ENCODE measurements at regions of chrX and their contacts with region 1.

Region 1: GRCh38 chrX:129654419-129655165 is at the start of gene APLN:
- DNase-seq: no peak
- H3K4me3 ChIP-seq: peak within 1 kb of the TSS; percentile 26
- H3K27ac ChIP-seq: no peak within 1 kb of the TSS
- H3K4me1 ChIP-seq: peaks cover 7% of the 10 kb centered on the region
- CTCF ChIP-seq: no peak
- total RNA-seq, gene APLN: not detected in 2 replicates

Region 2: GRCh38 chrX:129823115-129823514 is 168.5 kb after region 1 on chrX:
- CTCF ChIA-PET with region 1: no interaction called
- POLR2A ChIA-PET with region 1: interaction called, 3 read pairs
- intact Hi-C with region 1: loop called (anchors 1 kb)
- DNase-seq: peak; percentile 71
- H3K4me3 ChIP-seq: no peak overlapping the region
- H3K27ac ChIP-seq: no peak overlapping the region
- H3K4me1 ChIP-seq: peaks cover 10% of the 10 kb centered on the region
- CTCF ChIP-seq: peak; percentile 85